Activated CD4-positive, alpha-beta memory T cell treated with anti-CD3 and anti-CD28 coated beads for 36 hours (primary cell): ENCODE measurements at regions of chr5 and their contacts with region 1.

Region 1: GRCh38 chr5:35852084-35852734 is 4.5 kb upstream of the IL7R start:
- DNase-seq: peak; percentile 75
- H3K4me3 Mint-ChIP-seq: peak overlapping the region; percentile 93
- H3K27ac Mint-ChIP-seq: peak overlapping the region; percentile 100
- H3K4me1 Mint-ChIP-seq: peaks cover 75% of the 10 kb centered on the region
- H3K27me3 Mint-ChIP-seq: no peaks in the 10 kb centered on the region

Region 2: DNA sequence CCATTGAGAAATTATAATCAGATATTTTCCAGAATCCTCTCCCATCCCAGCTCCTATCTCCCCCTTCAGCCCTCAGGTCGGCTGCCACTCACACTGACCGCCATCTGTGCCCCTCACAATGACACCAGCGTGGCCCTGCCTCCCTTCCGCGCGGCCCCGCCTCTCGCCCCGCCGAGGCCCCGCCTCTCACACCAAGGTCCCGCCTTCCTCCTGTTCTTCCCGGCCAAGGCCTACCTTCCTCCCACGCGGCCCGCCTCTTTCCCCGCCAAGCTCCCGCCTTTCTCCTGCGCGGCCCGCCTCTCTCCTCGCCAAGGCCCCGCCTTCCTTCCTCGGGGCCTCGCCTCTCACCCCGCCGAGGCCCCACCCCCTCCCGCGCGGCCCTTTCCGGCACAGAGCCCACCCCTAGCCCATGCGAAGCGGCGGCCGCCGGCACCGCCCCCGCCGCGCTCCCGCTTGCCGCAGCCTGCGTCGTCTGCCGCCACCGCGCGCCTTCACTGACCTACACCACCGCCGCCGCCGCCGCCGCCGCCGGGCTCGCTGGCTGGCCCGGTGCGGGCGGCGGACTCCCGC is 923.0 kb before region 1 on chr5 and contains the start of gene DNAJC21:
- CTCF ChIA-PET with region 1: no interaction called
- POLR2A ChIA-PET with region 1: no interaction called
- intact Hi-C with region 1: loop called (anchors 10 kb)
- DNase-seq: peak; percentile 99
- H3K4me3 Mint-ChIP-seq: peak within 1 kb of the TSS; percentile 97
- H3K27ac Mint-ChIP-seq: peak within 1 kb of the TSS; percentile 93
- H3K4me1 Mint-ChIP-seq: peaks cover 35% of the 10 kb centered on the region
- H3K27me3 Mint-ChIP-seq: no peaks in the 10 kb centered on the region
- total RNA-seq, gene DNAJC21: 60.3 to 62.3 TPM

Region 3: GRCh38 chr5:35593338-35593737 is 258.9 kb before region 1 on chr5:
- CTCF ChIA-PET with region 1: no interaction called
- POLR2A ChIA-PET with region 1: no interaction called
- intact Hi-C with region 1: no loop called
- DNase-seq: no peak
- H3K4me3 Mint-ChIP-seq: no peak overlapping the region
- H3K27ac Mint-ChIP-seq: no peak overlapping the region
- H3K4me1 Mint-ChIP-seq: no peaks in the 10 kb centered on the region
- H3K27me3 Mint-ChIP-seq: peaks cover 15% of the 10 kb centered on the region

Region 4: DNA sequence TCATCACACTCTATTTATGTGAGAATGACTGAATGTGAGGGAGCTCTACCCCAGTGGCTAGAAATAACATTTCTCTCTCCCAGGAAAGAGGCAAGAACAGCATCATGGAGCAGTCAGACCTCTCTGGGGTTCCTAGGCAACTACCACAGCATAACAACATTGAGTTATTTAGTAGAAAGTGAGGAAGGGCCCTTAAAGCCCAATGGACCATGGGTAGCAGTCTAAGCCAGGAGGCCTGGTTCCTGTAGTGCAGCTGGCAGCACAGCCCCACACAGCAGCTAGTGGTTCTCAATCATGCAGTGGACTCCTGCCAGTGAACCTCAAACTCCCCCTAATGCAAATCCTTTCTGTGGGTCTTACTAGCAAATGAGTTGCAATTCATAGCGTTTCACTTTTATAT is 179.2 kb before region 1 on chr5:
- CTCF ChIA-PET with region 1: no interaction called
- POLR2A ChIA-PET with region 1: no interaction called
- intact Hi-C with region 1: loop called (anchors 2 kb)
- DNase-seq: peak; percentile 66
- H3K4me3 Mint-ChIP-seq: no peak overlapping the region
- H3K27ac Mint-ChIP-seq: peak overlapping the region; percentile 69
- H3K4me1 Mint-ChIP-seq: peaks cover 60% of the 10 kb centered on the region
- H3K27me3 Mint-ChIP-seq: no peaks in the 10 kb centered on the region

Region 5: DNA sequence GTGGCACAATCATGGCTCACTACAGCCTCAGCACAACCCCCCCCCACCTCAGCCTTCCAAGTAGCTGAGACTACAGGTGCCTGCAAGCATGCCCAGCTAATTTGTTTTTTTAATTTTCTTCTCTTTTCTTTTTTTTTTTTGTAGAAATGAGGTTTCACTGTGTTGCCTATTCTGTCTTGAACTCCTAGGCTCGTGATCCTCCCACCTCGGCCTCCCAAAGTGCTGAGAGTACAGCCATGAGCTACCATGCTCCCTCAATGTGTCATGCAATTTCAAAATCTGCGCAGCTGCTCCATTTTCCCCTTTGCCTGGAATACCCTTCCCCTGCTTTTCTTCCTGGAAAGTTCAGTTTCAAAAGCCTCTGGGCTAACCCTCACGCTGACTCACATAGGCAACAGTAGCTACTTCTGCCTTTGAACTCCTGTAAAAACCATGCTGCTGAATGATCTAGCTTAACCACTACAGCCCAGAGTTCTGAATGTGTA is 66.6 kb before region 1 on chr5:
- CTCF ChIA-PET with region 1: interaction called, 42 read pairs
- POLR2A ChIA-PET with region 1: interaction called, 10 read pairs
- intact Hi-C with region 1: loop called (anchors 1 kb)
- DNase-seq: peak; percentile 71
- H3K4me3 Mint-ChIP-seq: peak overlapping the region; percentile 17
- H3K27ac Mint-ChIP-seq: peak overlapping the region; percentile 89
- H3K4me1 Mint-ChIP-seq: peaks cover 85% of the 10 kb centered on the region
- H3K27me3 Mint-ChIP-seq: no peaks in the 10 kb centered on the region

Region 6: DNA sequence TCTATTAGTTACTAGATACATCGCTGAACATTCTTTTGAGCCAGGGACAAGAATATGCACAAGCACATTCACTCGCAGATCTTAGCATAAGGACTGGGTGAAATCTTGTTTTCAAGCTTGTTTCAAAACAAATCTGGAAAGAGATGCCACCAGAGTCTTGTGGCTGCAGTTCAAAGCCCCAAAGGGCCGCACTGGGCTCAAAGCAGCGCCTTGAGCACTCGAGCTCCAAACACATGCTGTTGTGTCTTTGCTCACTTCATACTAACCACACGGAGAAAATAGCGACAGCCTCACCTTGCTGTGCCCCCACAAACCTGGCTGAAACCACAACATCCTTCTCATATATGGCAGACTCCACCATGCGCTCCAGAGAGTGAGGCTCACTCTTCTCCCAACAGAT is 29.7 kb before region 1 on chr5:
- CTCF ChIA-PET with region 1: interaction called, 5 read pairs
- POLR2A ChIA-PET with region 1: interaction called, 87 read pairs
- intact Hi-C with region 1: loop called (anchors 1 kb)
- DNase-seq: peak; percentile 64
- H3K4me3 Mint-ChIP-seq: peak overlapping the region; percentile 40
- H3K27ac Mint-ChIP-seq: peak overlapping the region; percentile 94
- H3K4me1 Mint-ChIP-seq: peaks cover 87% of the 10 kb centered on the region
- H3K27me3 Mint-ChIP-seq: no peaks in the 10 kb centered on the region

Region 7: GRCh38 chr5:35876921-35877320 is 24.7 kb after region 1 on chr5:
- CTCF ChIA-PET with region 1: no interaction called
- POLR2A ChIA-PET with region 1: interaction called, 5 read pairs
- intact Hi-C with region 1: loop called (anchors 1 kb)
- DNase-seq: no peak
- H3K4me3 Mint-ChIP-seq: no peak overlapping the region
- H3K27ac Mint-ChIP-seq: peak overlapping the region; percentile 80
- H3K4me1 Mint-ChIP-seq: peaks cover 79% of the 10 kb centered on the region
- H3K27me3 Mint-ChIP-seq: no peaks in the 10 kb centered on the region

Region 8: GRCh38 chr5:35919191-35919590 is 67.0 kb after region 1 on chr5:
- CTCF ChIA-PET with region 1: interaction called, 26 read pairs
- POLR2A ChIA-PET with region 1: interaction called, 19 read pairs
- intact Hi-C with region 1: loop called (anchors 1 kb)
- DNase-seq: peak; percentile 63
- H3K4me3 Mint-ChIP-seq: no peak overlapping the region
- H3K27ac Mint-ChIP-seq: peak overlapping the region; percentile 67
- H3K4me1 Mint-ChIP-seq: peaks cover 48% of the 10 kb centered on the region
- H3K27me3 Mint-ChIP-seq: no peaks in the 10 kb centered on the region